Cardiac septum (tissue), 1 donor: ENCODE measurements at regions of chr12 and their contacts with region 1.

Region 1: DNA sequence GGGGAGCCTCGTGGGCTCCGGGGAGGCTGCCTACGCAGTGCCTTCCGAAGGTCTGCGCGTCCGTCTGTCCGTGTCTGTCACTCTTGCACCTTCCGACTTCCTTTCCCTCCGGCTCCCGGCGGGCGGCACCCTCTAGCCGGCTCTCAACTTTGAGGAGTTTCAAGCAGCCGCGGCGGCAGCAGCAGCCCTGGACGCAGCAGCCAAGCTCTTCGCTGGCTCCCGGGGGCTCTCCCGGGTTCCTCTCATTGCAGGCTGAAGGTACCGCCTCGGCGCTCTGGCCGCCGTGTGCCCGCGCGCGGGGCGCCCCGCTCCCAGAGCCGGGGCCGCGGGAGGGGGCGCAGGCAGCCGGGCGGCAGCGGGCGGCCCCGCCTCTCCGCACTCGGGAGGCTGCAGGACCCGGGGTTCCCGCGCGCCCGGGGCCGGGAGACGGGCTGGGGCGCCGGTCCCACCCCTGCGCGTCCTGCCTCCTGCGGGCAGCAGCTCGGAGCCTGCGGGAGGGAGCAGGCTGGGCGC is at the starts of genes AMIGO2 and PCED1B:
- DNase-seq: peak; percentile 87
- total RNA-seq, gene AMIGO2: 1.3 TPM
- total RNA-seq, gene PCED1B: 1.9 TPM

Region 2: GRCh38 chr12:47223848-47224213 is 144.3 kb after region 1 on chr12:
- intact Hi-C with region 1: loop called (anchors 10 kb)
- DNase-seq: no peak

Region 3: DNA sequence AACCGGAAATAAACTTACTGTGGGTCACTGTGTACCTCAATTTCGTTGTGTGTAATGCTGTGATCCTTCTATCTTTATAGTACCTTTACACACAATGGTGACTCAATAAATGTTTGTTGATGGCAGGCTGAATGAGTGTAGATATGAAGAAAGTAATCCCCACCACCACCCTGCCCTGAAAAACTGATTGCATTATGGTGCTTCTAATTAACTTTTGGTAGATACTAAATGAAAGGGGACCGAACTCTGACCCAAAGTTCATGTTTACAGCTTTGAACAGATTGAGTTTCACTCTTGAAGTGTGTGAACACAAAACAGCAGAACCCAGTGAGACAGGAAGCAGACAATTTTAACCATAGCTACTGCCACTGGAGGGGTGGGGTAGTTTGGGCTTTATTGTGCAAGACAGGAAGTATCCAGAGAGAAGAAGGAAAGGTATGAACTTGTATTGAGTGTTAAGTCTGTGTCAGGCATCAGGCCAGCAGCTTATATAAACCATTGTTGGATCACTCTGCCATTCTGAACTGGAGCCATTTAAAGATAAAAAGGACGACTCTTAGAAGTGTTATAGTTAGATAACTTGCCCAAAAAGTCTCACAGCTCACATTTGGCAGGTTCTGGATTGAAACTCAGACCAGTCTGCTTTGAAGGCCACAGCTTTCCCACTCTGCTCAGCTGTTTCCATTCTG is 197.2 kb after region 1 on chr12:
- intact Hi-C with region 1: loop called (anchors 5 kb)
- DNase-seq: no peak